GM10248 (cell line): ENCODE measurements at regions of chr10 and their contacts with region 1.

Region 1: GRCh38 chr10:80699602-80700039 is 161.9 kb downstream of the SH2D4B start:
- DNase-seq: peak; percentile 81
- CTCF ChIP-seq: peak; percentile 97

Region 2: GRCh38 chr10:80589726-80590373 is 109.8 kb before region 1 on chr10:
- CTCF ChIA-PET with region 1: no interaction called
- POLR2A ChIA-PET with region 1: no interaction called
- DNase-seq: peak; percentile 50
- CTCF ChIP-seq: no peak

Region 3: GRCh38 chr10:80684259-80684658 is 15.4 kb before region 1 on chr10:
- CTCF ChIA-PET with region 1: interaction called, 14 read pairs
- POLR2A ChIA-PET with region 1: no interaction called
- DNase-seq: no peak
- CTCF ChIP-seq: no peak

Region 4: GRCh38 chr10:80729896-80730295 is 30.3 kb after region 1 on chr10:
- CTCF ChIA-PET with region 1: no interaction called
- POLR2A ChIA-PET with region 1: no interaction called
- DNase-seq: no peak
- CTCF ChIP-seq: no peak

Region 5: DNA sequence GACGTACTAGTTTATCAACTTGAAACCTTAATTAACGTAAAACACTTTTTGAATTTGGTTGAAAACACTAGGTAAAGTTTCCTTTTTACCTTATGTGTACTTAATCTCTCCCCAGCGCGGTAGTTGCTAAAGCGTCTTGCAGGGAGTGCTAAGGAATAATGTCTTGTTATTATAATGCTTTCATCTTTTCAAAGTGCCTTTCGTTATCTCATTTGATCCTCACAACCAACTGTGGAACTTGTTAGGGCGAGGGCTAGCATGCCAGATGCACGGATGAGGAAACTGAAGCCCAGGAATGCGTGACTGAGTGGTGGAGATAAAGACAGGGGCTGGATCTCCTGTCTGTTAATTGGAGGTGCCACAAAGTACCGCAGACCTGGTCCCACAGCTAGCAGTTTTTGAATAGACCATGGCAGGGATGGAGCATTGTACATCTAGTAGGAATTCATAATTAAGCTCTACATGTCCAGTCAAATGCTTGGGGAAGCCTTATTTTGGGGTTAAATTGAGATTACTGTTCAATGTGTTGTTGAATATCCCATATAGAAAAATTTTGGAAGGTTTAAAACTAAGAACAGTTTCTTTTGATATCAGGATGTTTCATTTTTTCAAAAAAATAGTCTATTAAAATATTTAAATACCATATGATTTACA is 72.4 kb after region 1 on chr10:
- CTCF ChIA-PET with region 1: no interaction called
- POLR2A ChIA-PET with region 1: no interaction called
- DNase-seq: no peak
- CTCF ChIP-seq: no peak

Region 6: GRCh38 chr10:80861882-80862281 is 162.3 kb after region 1 on chr10:
- CTCF ChIA-PET with region 1: interaction called, 10 read pairs
- POLR2A ChIA-PET with region 1: no interaction called
- DNase-seq: no peak
- CTCF ChIP-seq: peak; percentile 35

Region 7: GRCh38 chr10:80945264-80945880 is 245.8 kb after region 1 on chr10:
- CTCF ChIA-PET with region 1: interaction called, 16 read pairs
- POLR2A ChIA-PET with region 1: no interaction called
- DNase-seq: peak; percentile 10
- CTCF ChIP-seq: peak; percentile 58

Region 8: DNA sequence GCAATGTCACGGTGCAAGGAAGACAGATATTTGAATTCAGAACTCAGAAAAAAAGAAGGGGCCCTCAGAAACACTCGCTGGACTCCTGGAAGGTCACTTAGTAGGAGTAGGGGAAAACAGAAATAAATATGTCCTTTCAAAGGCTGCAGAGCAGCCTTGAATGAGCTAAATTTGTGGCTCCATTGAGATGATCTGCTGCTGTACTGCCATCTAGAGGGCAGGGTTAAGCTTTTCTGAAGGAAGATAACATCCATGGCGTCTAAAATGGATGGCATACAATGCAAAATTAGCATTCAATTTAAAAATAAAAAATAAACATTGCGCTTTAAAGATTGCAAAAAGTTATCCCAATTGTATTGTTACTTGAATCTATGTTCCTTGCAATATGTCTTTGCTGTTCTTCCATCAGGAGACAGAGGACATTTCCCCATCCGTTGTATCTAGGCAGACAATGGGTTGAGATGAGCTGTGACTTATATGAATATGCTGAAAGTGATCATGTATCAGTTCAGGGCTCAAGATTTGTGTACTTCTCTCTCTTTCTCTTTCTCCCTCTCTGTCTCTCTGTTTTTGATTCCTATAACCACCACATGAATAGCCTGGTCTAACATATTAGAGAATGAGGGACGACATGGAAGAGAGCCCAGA is 480.3 kb after region 1 on chr10:
- CTCF ChIA-PET with region 1: interaction called, 32 read pairs
- POLR2A ChIA-PET with region 1: no interaction called
- DNase-seq: peak; percentile 35
- CTCF ChIP-seq: peak; percentile 64